HEK293 (cell line): ENCODE measurements at regions of chr4 and their contacts with region 1.

Region 1: GRCh38 chr4:25986807-25987206 is 72.8 kb downstream of the SMIM20 start:
- H3K4me3 ChIP-seq: no peak overlapping the region
- H3K27ac ChIP-seq: no peak overlapping the region
- H3K4me1 ChIP-seq: no peaks in the 10 kb centered on the region
- CTCF ChIP-seq: no peak

Region 2: GRCh38 chr4:26000274-26000950 is 13.6 kb after region 1 on chr4:
- CTCF ChIA-PET with region 1: interaction called, 22 read pairs
- POLR2A ChIA-PET with region 1: no interaction called
- H3K4me3 ChIP-seq: no peak overlapping the region
- H3K27ac ChIP-seq: no peak overlapping the region
- H3K4me1 ChIP-seq: no peaks in the 10 kb centered on the region
- CTCF ChIP-seq: no peak

Region 3: GRCh38 chr4:26058537-26058936 is 71.7 kb after region 1 on chr4:
- CTCF ChIA-PET with region 1: interaction called, 15 read pairs
- POLR2A ChIA-PET with region 1: no interaction called
- H3K4me3 ChIP-seq: no peak overlapping the region
- H3K27ac ChIP-seq: no peak overlapping the region
- H3K4me1 ChIP-seq: no peaks in the 10 kb centered on the region
- CTCF ChIP-seq: no peak